HepG2 (cell line): ENCODE measurements at regions of chr1 and their contacts with region 1.

Region 1: DNA sequence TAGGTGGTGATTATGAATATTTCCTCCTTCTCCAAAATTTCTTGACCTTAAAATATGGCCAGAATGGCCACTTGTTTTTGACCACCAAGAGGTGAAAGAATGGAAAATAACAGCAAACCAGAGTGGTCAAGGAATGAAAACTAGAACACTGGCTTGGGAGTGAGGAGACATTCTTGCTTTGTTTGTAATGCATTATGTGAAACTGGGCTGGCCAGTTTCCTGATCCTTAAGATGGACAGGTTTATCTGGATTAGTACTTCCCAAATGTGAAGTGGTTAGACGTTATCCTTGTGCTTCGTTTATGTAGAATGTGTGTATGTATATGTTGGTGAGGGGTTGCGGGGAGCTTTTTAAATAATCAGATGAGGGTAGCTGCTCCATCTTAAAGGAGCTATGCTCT is 12.8 kb downstream of the PLA2G4A start:
- DNase-seq: no peak
- ATAC-seq: no peak
- H3K4me3 ChIP-seq: no peak overlapping the region
- H3K27ac ChIP-seq: no peak overlapping the region
- H3K4me1 ChIP-seq: no peaks in the 10 kb centered on the region
- H3K27me3 ChIP-seq: no peaks in the 10 kb centered on the region
- CTCF ChIP-seq: no peak
- EP300 ChIP-seq: no peak
- POLR2A ChIP-seq: no peak
- RAD21 ChIP-seq: no peak

Region 2: DNA sequence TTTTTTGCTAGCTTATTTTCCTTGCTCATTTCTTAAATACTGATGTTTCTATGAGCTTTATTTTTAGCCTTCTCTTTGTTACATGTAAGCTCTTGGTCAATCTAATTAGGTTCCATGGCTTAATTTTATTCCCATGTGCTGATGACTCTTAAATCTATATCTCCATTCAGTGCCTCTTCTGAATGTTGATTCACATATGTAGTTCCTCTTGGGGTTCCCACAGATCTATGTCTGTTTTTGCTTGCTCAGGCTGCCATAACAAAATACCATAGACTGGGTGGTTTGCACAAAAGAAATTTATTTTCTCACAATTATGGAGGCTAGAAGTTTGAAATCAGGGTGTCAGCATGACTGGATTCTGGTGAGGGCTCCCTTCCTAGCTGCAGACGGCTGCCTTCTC is 71.2 kb before region 1 on chr1:
- CTCF ChIA-PET with region 1: no interaction called
- POLR2A ChIA-PET with region 1: no interaction called
- in situ Hi-C with region 1: no loop called
- intact Hi-C with region 1: loop called (anchors 2 kb)
- DNase-seq: no peak
- ATAC-seq: no peak
- H3K4me3 ChIP-seq: no peak overlapping the region
- H3K27ac ChIP-seq: no peak overlapping the region
- H3K4me1 ChIP-seq: no peaks in the 10 kb centered on the region
- H3K27me3 ChIP-seq: no peaks in the 10 kb centered on the region
- CTCF ChIP-seq: no peak
- EP300 ChIP-seq: no peak
- POLR2A ChIP-seq: no peak
- RAD21 ChIP-seq: no peak

Region 3: DNA sequence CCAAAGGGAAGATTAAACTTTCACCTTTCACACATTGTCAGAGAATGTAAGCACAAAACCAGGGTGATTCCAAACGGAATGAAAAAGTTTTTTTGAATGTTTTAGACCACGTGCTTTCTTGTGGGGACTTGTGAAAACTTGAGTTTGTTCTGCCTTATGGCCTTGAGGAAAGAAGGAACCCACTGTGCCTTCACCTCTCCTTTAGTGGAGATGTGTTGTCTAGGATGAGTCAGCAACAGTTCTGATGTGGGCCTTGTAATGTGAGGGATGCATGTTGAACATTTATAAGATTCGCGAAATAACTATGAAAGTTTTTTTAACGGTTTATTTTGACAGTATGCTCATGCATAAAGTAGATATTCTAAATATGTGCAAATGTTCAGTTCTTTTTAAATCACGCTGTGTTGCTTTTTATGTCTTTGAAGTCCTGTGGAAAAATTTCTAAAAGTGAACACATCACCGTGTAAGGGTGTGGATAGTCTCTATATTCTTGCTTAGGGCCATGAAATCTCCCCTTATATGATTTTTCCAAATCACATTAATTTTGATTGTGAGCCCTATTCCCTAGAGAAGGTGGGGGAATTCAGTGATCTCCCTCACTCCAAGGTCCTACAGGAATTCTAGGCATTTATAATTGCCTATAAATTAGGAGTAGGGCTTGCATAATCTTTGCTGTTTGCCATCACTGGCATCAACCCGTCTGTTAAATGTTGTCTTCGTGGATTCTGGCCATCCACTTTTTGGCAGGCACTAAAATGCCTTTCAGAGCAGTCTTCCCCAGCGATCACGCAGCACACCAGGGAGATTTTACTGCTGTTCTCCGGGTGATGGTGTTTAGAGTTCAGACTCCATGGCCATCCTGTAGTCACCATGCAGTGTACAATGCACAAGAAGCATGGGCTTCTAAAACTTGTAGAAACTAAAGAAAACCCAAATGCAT is 34.6 kb after region 1 on chr1:
- CTCF ChIA-PET with region 1: no interaction called
- POLR2A ChIA-PET with region 1: no interaction called
- in situ Hi-C with region 1: no loop called
- intact Hi-C with region 1: no loop called
- DNase-seq: no peak
- ATAC-seq: no peak
- H3K4me3 ChIP-seq: no peak overlapping the region
- H3K27ac ChIP-seq: no peak overlapping the region
- H3K4me1 ChIP-seq: no peaks in the 10 kb centered on the region
- H3K27me3 ChIP-seq: no peaks in the 10 kb centered on the region
- CTCF ChIP-seq: no peak
- EP300 ChIP-seq: no peak
- POLR2A ChIP-seq: no peak
- RAD21 ChIP-seq: no peak